HepG2 (cell line): ENCODE measurements at regions of chr10 and their contacts with region 1.

Region 1: GRCh38 chr10:58467931-58468635 is 44.6 kb upstream of the BICC1 start:
- DNase-seq: peak; percentile 37
- ATAC-seq: peak; percentile 44
- H3K4me3 ChIP-seq: no peak overlapping the region; a peak in 1 of 6 replicates
- H3K27ac ChIP-seq: peak overlapping the region; percentile 68
- H3K4me1 ChIP-seq: peaks cover 48% of the 10 kb centered on the region
- H3K27me3 ChIP-seq: no peaks in the 10 kb centered on the region
- CTCF ChIP-seq: no peak
- EP300 ChIP-seq: no peak
- POLR2A ChIP-seq: no peak
- RAD21 ChIP-seq: no peak

Region 2: DNA sequence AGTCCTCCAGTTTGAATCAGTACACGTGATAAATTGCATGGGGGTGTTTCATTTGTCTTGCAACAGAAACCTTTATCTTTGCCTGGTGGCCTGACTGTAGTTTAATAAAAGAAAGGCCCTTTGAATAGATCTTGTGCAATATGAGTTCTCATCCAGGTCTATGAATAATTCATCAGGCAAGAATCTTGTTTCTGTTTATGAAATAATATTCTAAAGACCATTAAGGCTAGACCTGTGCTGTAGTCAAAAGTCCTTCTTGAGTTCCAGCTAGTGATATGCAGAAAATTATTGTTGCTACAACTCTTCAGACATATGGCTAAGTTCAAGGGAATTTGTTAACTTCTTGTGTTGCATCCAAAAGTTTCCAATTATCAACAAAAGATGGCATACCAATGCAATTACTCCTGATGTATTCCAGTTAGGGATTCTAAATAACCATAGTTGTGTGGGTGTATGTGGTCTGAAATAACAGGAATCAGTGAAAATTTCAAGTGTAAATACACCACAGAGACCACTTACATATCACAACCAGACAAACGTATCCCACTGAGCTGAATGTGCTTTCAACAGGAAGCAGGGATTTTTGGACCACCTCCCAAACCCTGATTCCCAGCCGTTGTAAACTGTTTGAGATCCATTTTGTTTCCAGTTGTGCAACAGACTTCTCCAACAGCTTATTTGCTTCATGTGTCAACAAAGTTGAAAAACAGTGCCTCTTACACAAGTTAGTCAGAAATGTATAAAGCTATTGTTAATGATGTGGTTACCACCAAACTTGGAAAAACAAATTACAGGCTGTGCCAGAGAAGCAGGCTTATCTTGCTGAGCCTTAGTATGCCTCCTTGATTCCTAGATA is 10.1 kb before region 1 on chr10:
- CTCF ChIA-PET with region 1: no interaction called
- POLR2A ChIA-PET with region 1: interaction called, 20 read pairs
- in situ Hi-C with region 1: no loop called
- intact Hi-C with region 1: no loop called
- DNase-seq: peak; percentile 92
- ATAC-seq: peak; percentile 67
- H3K4me3 ChIP-seq: no peak overlapping the region
- H3K27ac ChIP-seq: peak overlapping the region; percentile 45
- H3K4me1 ChIP-seq: peaks cover 44% of the 10 kb centered on the region
- H3K27me3 ChIP-seq: no peaks in the 10 kb centered on the region; a peak in 1 of 5 replicates
- CTCF ChIP-seq: no peak
- EP300 ChIP-seq: peak in 1 of 2 experiments; percentile 86; a peak in 2 of 4 replicates
- POLR2A ChIP-seq: no peak
- RAD21 ChIP-seq: no peak

Region 3: DNA sequence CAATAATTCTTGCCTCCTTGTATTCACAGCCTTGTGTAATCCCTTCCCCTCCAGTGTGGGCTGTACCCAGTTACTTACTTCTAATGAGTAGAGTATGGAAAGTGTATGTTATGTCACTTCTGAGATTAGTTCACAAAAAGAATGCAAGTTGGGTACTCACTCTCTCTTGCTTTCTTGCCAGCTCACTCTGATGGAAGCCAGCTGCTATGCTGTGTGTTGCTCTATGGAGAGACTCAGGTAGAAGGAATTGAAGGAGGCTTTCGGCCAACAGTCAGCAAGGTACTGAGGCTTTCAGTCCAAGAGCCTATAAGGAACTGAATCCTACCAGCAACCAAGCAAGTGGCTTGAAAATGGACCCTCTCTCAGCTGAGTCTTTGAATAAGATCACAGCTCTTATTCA is 34.9 kb after region 1 on chr10:
- CTCF ChIA-PET with region 1: no interaction called
- POLR2A ChIA-PET with region 1: no interaction called
- in situ Hi-C with region 1: no loop called
- intact Hi-C with region 1: no loop called
- DNase-seq: no peak
- ATAC-seq: no peak
- H3K4me3 ChIP-seq: no peak overlapping the region
- H3K27ac ChIP-seq: no peak overlapping the region
- H3K4me1 ChIP-seq: no peaks in the 10 kb centered on the region
- H3K27me3 ChIP-seq: peaks cover 0 to 12% of the 10 kb centered on the region in 2 experiments; a peak in 2 of 5 replicates
- CTCF ChIP-seq: no peak
- EP300 ChIP-seq: no peak
- POLR2A ChIP-seq: no peak
- RAD21 ChIP-seq: no peak

Region 4: GRCh38 chr10:58675321-58675720 is 207.2 kb after region 1 on chr10:
- CTCF ChIA-PET with region 1: no interaction called
- POLR2A ChIA-PET with region 1: no interaction called
- in situ Hi-C with region 1: no loop called
- intact Hi-C with region 1: no loop called
- DNase-seq: no peak
- ATAC-seq: no peak
- H3K4me3 ChIP-seq: no peak overlapping the region
- H3K27ac ChIP-seq: no peak overlapping the region
- H3K4me1 ChIP-seq: no peaks in the 10 kb centered on the region
- H3K27me3 ChIP-seq: no peaks in the 10 kb centered on the region
- CTCF ChIP-seq: no peak
- EP300 ChIP-seq: no peak
- POLR2A ChIP-seq: no peak
- RAD21 ChIP-seq: no peak